ENCODE measurements at regions of chr14 and their contacts with region 1.

Region 1: GRCh38 chr14:23610090-23610814 is 25.9 kb upstream of the DHRS2 start:
- DNase-seq: no peak
- H3K4me3 ChIP-seq: no peak overlapping the region
- H3K27ac ChIP-seq: no peak overlapping the region
- H3K4me1 ChIP-seq: peaks cover 19% of the 10 kb centered on the region
- H3K27me3 ChIP-seq: no peaks in the 10 kb centered on the region
- CTCF ChIP-seq: no peak

Region 2: DNA sequence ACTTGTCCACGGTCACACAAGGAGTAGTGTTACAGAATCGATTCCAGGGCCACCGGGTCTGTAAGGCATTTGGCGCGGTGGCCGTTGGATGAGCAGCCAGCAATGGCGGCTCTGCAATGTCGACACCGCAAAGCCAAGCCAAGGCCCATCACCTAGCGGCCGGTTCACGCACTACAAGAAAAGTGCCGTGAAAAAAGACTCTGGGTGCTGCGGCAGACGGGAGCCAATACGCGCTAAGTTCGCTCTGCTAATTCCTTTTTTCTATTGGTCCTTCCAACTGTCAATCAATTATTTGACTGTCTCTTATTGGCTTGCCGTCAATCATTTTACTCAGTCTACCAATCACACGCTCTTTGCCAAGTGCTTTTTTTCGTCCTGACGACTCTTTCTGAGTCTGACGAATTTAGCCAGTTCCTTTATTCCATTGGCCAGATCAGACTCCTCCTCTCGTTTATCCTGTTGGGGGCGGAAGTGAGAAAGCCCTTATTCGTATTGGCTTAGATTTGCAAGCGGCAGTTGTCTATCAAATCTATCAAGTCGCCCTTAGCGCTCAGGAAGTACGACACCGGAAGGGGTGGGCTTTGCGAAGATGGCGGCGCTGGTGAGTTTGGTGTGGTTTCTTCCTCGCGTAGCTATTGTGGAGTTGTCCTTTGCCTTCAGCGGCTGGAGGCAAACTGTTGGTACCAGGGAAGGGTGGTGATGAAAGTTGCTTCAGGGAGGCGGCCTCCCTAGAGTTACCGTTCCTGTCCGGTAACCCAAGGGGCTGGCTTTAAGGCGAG is 140.9 kb before region 1 on chr14 and contains the start of gene NGDN:
- CTCF ChIA-PET with region 1: no interaction called
- POLR2A ChIA-PET with region 1: no interaction called
- intact Hi-C with region 1: no loop called
- DNase-seq: peak; percentile 82 to 98
- H3K4me3 ChIP-seq: peak within 1 kb of the TSS; percentile 65
- H3K27ac ChIP-seq: peak within 1 kb of the TSS; percentile 35; the same call in 1 of the 2 replicates
- H3K4me1 ChIP-seq: peaks cover 5% of the 10 kb centered on the region
- H3K27me3 ChIP-seq: no peaks in the 10 kb centered on the region
- CTCF ChIP-seq: peak; percentile 73
- total RNA-seq, gene NGDN: 23.1 and 27.6 TPM in 2 replicates

Region 3: GRCh38 chr14:23694085-23694975 is 84.1 kb after region 1 on chr14:
- CTCF ChIA-PET with region 1: no interaction called
- POLR2A ChIA-PET with region 1: interaction called, 23 read pairs
- intact Hi-C with region 1: no loop called
- DNase-seq: peak; percentile 75 to 96
- H3K4me3 ChIP-seq: peak overlapping the region; percentile 31; the same call in 1 of the 2 replicates
- H3K27ac ChIP-seq: peak overlapping the region; percentile 98
- H3K4me1 ChIP-seq: peaks cover 53% of the 10 kb centered on the region
- H3K27me3 ChIP-seq: no peaks in the 10 kb centered on the region
- CTCF ChIP-seq: no peak